AG04449 (cell line): ENCODE measurements at regions of chr5 and their contacts with region 1.

Region 1: DNA sequence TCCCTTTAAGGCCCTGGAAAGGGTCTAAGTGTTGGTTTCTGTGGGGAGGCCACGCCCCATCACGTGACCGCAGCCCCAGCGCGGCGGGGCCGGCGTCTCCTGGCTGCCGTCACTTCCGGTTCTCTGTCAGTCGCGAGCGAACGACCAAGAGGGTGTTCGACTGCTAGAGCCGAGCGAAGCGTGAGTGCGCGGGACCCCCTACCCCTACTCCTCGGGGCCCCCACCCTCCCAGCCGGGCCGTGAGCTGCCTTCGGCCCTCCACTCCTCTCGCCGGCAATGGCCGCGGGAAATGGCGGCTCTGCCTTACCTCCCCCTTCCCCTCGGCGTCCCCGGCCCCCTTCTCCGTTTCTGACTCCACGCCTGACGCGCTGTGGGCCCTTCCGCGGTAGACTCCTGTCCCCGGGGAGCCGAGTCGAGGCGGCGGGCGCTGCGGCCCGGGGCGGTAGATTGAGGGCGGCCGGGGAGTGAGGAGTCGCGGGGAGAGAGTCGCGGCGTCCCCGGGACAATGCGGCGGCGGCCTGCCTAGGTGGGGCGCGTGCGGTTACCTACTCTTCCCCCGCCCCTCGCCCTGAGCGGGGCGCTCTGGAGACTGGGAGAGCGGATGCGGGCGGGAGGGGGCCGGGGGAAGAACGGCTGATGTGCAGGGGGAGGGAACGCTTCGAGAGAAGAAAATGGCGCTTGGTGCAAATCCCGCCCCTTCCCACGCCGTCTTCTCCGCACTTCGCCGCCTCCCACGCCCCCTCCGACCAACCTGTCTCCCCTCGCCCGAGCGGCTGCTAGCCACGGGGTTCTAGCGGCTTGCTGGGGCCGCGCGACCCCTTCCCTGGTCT is at the start of gene SUB1:
- DNase-seq: peak; percentile 24
- H3K4me3 ChIP-seq: peak within 1 kb of the TSS; percentile 90
- CTCF ChIP-seq: peak; percentile 3

Region 2: GRCh38 chr5:32232441-32233219 is 353.0 kb before region 1 on chr5:
- CTCF ChIA-PET with region 1: interaction called, 20 read pairs
- POLR2A ChIA-PET with region 1: no interaction called
- DNase-seq: no peak
- H3K4me3 ChIP-seq: no peak overlapping the region
- CTCF ChIP-seq: peak; percentile 78

Region 3: DNA sequence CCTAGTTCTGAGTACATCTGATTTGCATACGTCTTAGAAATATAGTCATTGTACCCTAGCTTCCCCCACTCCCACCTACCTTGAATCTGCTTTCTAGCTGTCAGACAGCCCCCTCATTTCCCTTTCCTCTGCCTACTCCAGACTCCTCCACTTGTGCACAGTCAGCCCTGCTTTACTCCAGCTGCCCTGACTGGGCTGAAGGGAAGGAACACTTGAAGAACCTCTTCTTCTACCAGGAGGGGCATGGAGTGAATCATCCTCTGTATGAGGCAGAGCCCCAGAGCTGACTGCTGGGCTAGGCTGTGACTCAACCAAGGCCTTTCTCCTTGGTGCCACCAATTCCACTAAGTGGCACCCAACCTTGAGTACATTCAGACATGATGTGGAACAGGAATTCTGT is 123.0 kb before region 1 on chr5:
- CTCF ChIA-PET with region 1: interaction called, 11 read pairs
- POLR2A ChIA-PET with region 1: no interaction called
- DNase-seq: no peak
- H3K4me3 ChIP-seq: no peak overlapping the region
- CTCF ChIP-seq: no peak

Region 4: DNA sequence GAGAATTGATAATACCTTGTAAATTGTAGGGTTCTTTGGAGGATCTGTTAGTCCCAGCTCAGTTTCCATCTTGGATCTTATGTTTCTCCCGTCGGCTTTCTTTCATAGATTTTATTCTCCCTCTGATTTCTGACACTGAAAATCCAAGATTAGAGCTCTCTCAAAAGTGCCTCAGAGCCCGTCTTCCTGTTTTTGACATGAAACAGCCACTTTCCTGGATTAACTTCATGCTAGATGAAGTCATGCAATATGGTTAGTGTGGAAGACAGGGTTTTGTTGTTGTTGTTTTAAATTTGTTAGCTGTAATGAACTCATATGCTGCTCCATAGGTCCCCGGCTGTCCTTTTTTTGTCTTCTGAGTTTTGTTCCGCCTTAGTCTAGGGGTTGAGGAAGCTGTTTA is 89.6 kb before region 1 on chr5:
- CTCF ChIA-PET with region 1: interaction called, 449 read pairs
- POLR2A ChIA-PET with region 1: interaction called, 4 read pairs
- DNase-seq: no peak
- H3K4me3 ChIP-seq: no peak overlapping the region
- CTCF ChIP-seq: no peak

Region 5: DNA sequence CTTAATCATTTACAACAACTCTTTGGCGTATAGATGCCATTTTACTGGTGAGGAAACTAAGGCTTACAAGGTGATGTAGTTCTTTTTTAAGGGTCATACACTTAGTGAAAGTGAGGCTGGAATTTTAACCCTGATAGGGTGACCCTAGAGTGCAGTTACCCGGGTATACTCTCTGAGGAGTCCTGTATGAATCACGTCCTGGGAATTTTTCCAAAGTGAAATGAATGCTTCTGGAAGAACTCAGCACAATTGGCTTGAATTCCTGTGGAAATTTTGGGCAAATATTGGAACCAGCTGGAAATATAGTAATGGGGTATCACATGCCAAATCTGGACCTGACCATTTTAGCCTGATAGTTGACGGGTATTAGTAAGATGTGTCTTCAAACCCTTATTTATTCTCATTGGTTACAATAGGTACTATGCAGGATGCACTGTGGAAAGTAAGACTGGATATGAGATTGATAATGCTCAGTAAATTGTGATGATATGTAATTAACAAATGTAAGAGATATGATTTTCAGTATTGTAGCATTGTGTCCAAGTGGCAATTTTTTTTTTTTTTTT is 14.5 kb after region 1 on chr5:
- CTCF ChIA-PET with region 1: interaction called, 17 read pairs
- POLR2A ChIA-PET with region 1: no interaction called
- DNase-seq: peak; percentile 41
- H3K4me3 ChIP-seq: no peak overlapping the region
- CTCF ChIP-seq: no peak